ENCODE measurements at regions of chr21 and their contacts with region 1.

Region 1: DNA sequence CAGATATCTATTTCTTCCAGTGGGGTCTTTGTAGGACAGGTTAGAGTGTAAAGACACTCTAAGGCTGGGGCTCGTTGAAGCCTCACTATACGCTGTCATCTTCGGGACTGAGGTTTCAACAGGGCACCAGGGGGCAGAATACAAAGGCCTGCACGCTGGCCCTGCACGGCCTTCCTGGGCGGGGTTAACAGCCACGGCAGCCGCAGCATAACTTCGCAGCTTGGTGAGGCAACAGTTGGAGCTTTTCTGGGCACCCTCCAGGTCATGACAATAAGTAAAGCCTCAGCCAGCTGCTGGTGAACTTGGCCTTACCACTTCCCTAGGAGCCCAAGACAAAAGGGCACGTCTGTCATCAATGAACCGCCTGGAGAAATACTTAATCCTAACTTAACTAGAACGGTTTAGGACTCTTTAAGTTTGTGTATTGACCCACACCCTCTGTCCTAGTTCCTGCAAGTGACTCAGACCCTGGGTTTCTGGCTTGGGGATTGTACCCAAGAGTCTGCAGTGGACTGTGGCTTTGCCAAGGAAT is 2.3 kb upstream of the RUNX1 start:
- DNase-seq: peak; percentile 69 to 94 (median 80)
- ATAC-seq: peak; percentile 46
- H3K4me3 ChIP-seq: no peak overlapping the region
- H3K4me3 Mint-ChIP-seq: peak overlapping the region; percentile 96
- H3K27ac ChIP-seq: peak overlapping the region; percentile 36 to 40
- H3K27ac Mint-ChIP-seq: peak overlapping the region; percentile 97
- H3K4me1 ChIP-seq: peaks cover 37% of the 10 kb centered on the region
- H3K4me1 Mint-ChIP-seq: peaks cover 64% of the 10 kb centered on the region
- H3K27me3 ChIP-seq: no peaks in the 10 kb centered on the region
- H3K27me3 Mint-ChIP-seq: no peaks in the 10 kb centered on the region
- CTCF ChIP-seq: peak; percentile 70

Region 2: GRCh38 chr21:34888569-34889319 is 162.6 kb before region 1 on chr21:
- CTCF ChIA-PET with region 1: interaction called, 25 read pairs
- POLR2A ChIA-PET with region 1: interaction called, 115 read pairs
- intact Hi-C with region 1: loop called (anchors 1 kb)
- DNase-seq: peak; percentile 39 to 87 (median 60)
- ATAC-seq: peak; percentile 30
- H3K4me3 ChIP-seq: peak overlapping the region; percentile 80
- H3K4me3 Mint-ChIP-seq: peak overlapping the region; percentile 93
- H3K27ac ChIP-seq: peak overlapping the region; percentile 56 to 79
- H3K27ac Mint-ChIP-seq: peak overlapping the region; percentile 96
- H3K4me1 ChIP-seq: peaks cover 43% of the 10 kb centered on the region
- H3K4me1 Mint-ChIP-seq: peaks cover 66% of the 10 kb centered on the region
- H3K27me3 ChIP-seq: no peaks in the 10 kb centered on the region
- H3K27me3 Mint-ChIP-seq: no peaks in the 10 kb centered on the region
- CTCF ChIP-seq: peak; percentile 3

Region 3: DNA sequence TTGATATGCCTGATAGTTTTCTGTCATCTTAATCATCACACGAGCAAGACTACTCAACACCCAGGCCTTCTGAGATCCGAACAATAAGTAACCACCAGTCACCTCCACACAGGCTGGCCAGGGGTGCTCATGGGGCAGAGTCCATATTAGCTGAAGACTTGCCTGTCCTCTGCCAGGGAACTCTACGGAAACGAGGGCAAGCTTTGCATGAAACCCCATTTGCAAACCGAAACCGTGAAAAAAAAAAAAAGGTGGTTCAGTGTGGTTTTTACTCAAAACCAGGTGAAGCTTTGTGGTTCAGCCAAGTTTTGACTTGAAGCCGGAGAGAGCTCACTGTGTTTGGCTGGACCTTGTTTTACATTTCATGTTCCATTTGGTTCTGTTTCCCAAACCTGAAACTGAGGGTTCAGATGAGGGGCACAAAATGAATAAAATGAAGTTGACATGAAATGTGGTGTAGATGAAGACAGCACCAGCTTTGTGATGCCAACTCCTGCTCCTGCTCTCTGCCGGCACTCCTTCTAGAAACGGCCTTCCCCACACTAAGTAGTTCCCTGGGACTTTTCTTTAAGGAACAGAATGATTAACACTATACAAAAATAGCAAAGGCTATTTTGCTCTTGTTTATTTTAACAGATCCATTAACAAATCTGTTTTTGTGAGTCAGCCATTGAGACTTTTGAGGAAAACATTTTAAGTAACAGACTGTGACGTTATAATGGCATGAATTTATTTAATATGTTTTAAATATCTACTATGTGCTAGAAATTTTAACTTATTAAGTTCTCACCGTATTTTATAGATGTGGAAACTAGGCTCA is 77.0 kb before region 1 on chr21:
- CTCF ChIA-PET with region 1: interaction called, 5 read pairs
- POLR2A ChIA-PET with region 1: interaction called, 6 read pairs
- intact Hi-C with region 1: loop called (anchors 5 kb)
- DNase-seq: peak in 11 of 14 experiments; percentile 18 to 87 (median 38)
- ATAC-seq: peak; percentile 85
- H3K4me3 ChIP-seq: peak overlapping the region; percentile 25
- H3K4me3 Mint-ChIP-seq: peak overlapping the region; percentile 88
- H3K27ac ChIP-seq: peak overlapping the region; percentile 29 to 36
- H3K27ac Mint-ChIP-seq: peak overlapping the region; percentile 92
- H3K4me1 ChIP-seq: peaks cover 47% of the 10 kb centered on the region
- H3K4me1 Mint-ChIP-seq: peaks cover 93% of the 10 kb centered on the region
- H3K27me3 ChIP-seq: no peaks in the 10 kb centered on the region
- H3K27me3 Mint-ChIP-seq: no peaks in the 10 kb centered on the region
- CTCF ChIP-seq: no peak

Region 4: DNA sequence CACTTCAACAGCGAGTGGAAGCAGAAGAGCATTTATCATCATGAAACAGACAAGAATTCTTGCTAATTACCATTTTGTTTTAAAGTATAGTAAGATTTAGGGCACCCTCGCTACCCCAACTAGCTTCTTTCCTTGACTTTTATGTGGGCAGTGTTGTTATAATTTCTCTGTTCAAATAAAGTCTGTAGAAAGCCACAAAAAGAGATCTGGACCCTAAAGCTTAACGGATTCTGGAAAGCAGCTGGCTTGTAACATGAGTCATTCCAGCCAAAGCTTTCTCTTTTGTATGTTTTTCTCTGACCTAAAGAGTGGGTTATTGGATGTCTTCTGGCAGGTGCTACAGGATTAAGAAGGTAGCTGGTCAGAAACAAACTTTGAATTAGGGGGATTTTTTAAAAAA is 39.7 kb before region 1 on chr21:
- CTCF ChIA-PET with region 1: interaction called, 7 read pairs
- POLR2A ChIA-PET with region 1: interaction called, 4 read pairs
- intact Hi-C with region 1: loop called in 1 of 2 experiments (anchors 5 kb)
- DNase-seq: no peak
- ATAC-seq: no peak
- H3K4me3 ChIP-seq: no peak overlapping the region
- H3K4me3 Mint-ChIP-seq: peak overlapping the region; percentile 42
- H3K27ac ChIP-seq: no peak overlapping the region
- H3K27ac Mint-ChIP-seq: peak overlapping the region; percentile 79
- H3K4me1 ChIP-seq: peaks cover 51% of the 10 kb centered on the region
- H3K4me1 Mint-ChIP-seq: peaks cover 95% of the 10 kb centered on the region
- H3K27me3 ChIP-seq: no peaks in the 10 kb centered on the region
- H3K27me3 Mint-ChIP-seq: no peaks in the 10 kb centered on the region
- CTCF ChIP-seq: no peak

Region 5: GRCh38 chr21:35036465-35037383 is 14.6 kb before region 1 on chr21:
- CTCF ChIA-PET with region 1: interaction called, 5 read pairs
- POLR2A ChIA-PET with region 1: interaction called, 13 read pairs
- intact Hi-C with region 1: no loop called
- DNase-seq: peak in 1 of 14 experiments; percentile 53
- ATAC-seq: no peak
- H3K4me3 ChIP-seq: peak overlapping the region; percentile 8
- H3K4me3 Mint-ChIP-seq: peak overlapping the region; percentile 65
- H3K27ac ChIP-seq: peak overlapping the region; percentile 25 to 75
- H3K27ac Mint-ChIP-seq: peak overlapping the region; percentile 97
- H3K4me1 ChIP-seq: peaks cover 89% of the 10 kb centered on the region
- H3K4me1 Mint-ChIP-seq: peaks cover 100% of the 10 kb centered on the region
- H3K27me3 ChIP-seq: no peaks in the 10 kb centered on the region
- H3K27me3 Mint-ChIP-seq: no peaks in the 10 kb centered on the region
- CTCF ChIP-seq: no peak

Region 6: GRCh38 chr21:35226948-35227744 is 175.8 kb after region 1 on chr21:
- CTCF ChIA-PET with region 1: no interaction called
- POLR2A ChIA-PET with region 1: interaction called, 12 read pairs
- intact Hi-C with region 1: loop called in 1 of 2 experiments (anchors 5 kb)
- DNase-seq: peak in 13 of 14 experiments; percentile 12 to 82 (median 38)
- ATAC-seq: peak; percentile 88
- H3K4me3 ChIP-seq: peak overlapping the region; percentile 11
- H3K4me3 Mint-ChIP-seq: peak overlapping the region; percentile 5
- H3K27ac ChIP-seq: peak overlapping the region in 1 of 2 donors; percentile 25
- H3K27ac Mint-ChIP-seq: peak overlapping the region; percentile 85
- H3K4me1 ChIP-seq: peaks cover 30% of the 10 kb centered on the region
- H3K4me1 Mint-ChIP-seq: peaks cover 49% of the 10 kb centered on the region
- H3K27me3 ChIP-seq: no peaks in the 10 kb centered on the region
- H3K27me3 Mint-ChIP-seq: no peaks in the 10 kb centered on the region
- CTCF ChIP-seq: no peak

Region 7: DNA sequence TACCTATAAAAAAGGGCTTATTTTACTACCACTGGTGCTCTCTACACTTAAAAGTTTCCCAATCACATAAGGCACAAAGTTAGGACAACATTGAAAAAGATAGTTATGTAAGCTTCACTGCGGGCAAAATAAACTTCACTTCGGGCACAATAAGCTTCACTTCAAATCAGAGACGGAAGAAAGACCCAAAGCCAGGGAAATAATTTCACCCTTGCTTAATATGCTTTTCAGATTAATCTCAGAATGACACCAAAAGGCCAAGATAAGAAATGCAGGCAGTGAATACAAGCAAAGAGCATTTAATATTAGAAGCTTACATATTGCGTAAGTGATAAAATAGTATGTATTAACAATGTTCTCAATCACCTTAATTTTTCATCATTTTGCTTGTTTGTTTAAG is 564.7 kb after region 1 on chr21:
- CTCF ChIA-PET with region 1: no interaction called
- POLR2A ChIA-PET with region 1: no interaction called
- intact Hi-C with region 1: loop called (anchors 1 to 10 kb)
- DNase-seq: peak in 3 of 14 experiments; percentile 14 to 32 (median 26)
- ATAC-seq: no peak
- H3K4me3 ChIP-seq: no peak overlapping the region
- H3K4me3 Mint-ChIP-seq: no peak overlapping the region
- H3K27ac ChIP-seq: no peak overlapping the region
- H3K27ac Mint-ChIP-seq: no peak overlapping the region
- H3K4me1 ChIP-seq: no peaks in the 10 kb centered on the region
- H3K4me1 Mint-ChIP-seq: peaks cover 4% of the 10 kb centered on the region
- H3K27me3 ChIP-seq: no peaks in the 10 kb centered on the region
- H3K27me3 Mint-ChIP-seq: no peaks in the 10 kb centered on the region
- CTCF ChIP-seq: peak; percentile 24

Measured in CD4-positive, alpha-beta T cell (primary cell).